ENCODE measurements at regions of chr11 and their contacts with region 1.

Region 1: DNA sequence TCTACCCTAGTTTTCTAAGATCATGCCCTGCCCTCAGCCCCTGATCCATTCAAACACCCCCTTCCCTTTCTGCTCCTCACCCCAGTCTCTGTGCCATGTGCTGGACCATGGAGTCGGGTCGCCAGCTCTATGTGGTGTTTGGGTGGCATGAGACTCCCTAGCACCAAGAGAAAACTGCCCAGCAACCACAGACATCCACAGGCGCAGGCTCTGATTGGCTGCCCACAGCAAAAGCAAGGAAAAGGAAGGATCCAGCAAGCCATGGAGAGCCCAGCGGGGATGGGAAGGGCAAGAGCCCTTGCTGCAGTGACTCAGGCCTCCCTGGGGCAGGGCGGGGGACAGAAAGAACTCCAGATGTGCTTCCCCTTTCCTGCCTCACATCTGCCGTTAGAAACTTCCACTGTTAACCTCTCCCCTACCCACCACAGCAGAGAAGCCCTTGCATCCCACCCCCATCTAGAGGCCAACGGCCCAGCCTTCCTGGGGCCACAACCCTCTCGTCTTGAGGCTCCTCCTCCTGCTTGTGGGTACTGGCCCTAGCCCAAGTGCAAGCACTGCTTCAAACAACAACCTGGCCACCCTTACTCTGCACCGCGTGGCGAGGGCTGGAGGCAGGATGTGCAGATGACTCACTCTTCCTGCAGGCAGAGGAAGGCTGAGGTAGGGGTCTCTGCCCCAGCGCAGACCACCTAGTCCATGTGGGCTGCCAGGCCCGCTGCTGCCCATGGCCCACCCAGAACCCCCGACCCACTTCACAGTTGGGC is 9.7 kb upstream of the AHNAK start:
- DNase-seq: peak; percentile 90 to 94
- H3K4me3 ChIP-seq: peak overlapping the region; percentile 38; the same call in 1 of the 2 replicates
- H3K27ac ChIP-seq: peak overlapping the region; percentile 92
- H3K4me1 ChIP-seq: peaks cover 96% of the 10 kb centered on the region
- H3K27me3 ChIP-seq: no peaks in the 10 kb centered on the region
- CTCF ChIP-seq: no peak

Region 2: GRCh38 chr11:62394825-62395538 is 161.3 kb before region 1 on chr11:
- CTCF ChIA-PET with region 1: interaction called, 19 read pairs
- POLR2A ChIA-PET with region 1: interaction called, 10 read pairs
- intact Hi-C with region 1: loop called (anchors 1 kb)
- DNase-seq: peak; percentile 71 to 75
- H3K4me3 ChIP-seq: no peak overlapping the region
- H3K27ac ChIP-seq: no peak overlapping the region
- H3K4me1 ChIP-seq: peaks cover 27% of the 10 kb centered on the region
- H3K27me3 ChIP-seq: no peaks in the 10 kb centered on the region
- CTCF ChIP-seq: peak; percentile 91

Region 3: GRCh38 chr11:62497132-62497915 is 59.0 kb before region 1 on chr11:
- CTCF ChIA-PET with region 1: interaction called, 14 read pairs
- POLR2A ChIA-PET with region 1: interaction called, 3 read pairs
- intact Hi-C with region 1: loop called (anchors 1 kb)
- DNase-seq: peak; percentile 76 to 98
- H3K4me3 ChIP-seq: no peak overlapping the region
- H3K27ac ChIP-seq: peak overlapping the region; percentile 73
- H3K4me1 ChIP-seq: peaks cover 28% of the 10 kb centered on the region
- H3K27me3 ChIP-seq: no peaks in the 10 kb centered on the region
- CTCF ChIP-seq: peak; percentile 74

Region 4: DNA sequence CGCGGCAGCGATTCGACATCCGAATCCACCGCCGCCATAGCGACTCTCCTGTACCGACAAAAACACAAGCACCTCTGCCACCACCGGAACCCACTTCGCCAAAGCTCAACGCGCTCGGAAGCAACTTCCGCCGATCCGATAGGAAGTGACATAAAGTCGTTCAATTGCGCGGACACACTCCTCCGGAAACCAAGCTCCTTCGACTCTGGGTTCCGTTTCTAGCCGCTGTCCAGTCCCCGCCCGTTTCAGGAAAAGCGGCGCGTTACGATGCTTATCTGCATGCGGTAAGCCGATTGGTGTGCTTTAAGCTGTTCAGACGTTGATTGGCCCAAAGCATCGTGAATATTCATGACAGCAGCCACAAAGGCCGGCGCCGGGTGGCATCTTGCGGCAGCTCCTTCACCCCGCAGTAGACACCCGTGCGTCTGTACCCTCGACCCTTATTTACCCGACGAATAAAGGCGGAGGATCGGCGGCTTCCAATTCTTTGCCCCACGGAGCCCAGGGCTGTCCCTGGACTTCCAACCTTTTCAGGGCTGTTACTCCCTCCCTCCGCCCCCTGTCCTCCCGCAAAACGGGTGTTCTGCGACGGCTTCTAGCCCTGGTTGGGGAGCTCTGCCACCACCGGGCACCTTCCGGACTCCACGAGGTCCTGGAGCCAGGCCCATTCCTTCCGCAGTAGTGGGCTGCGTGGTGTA is 35.3 kb after region 1 on chr11 and contains the start of gene TUT1:
- CTCF ChIA-PET with region 1: interaction called, 6 read pairs
- POLR2A ChIA-PET with region 1: interaction called, 5 read pairs
- intact Hi-C with region 1: loop called (anchors 5 kb)
- DNase-seq: peak; percentile 98 to 100
- H3K4me3 ChIP-seq: peak within 1 kb of the TSS; percentile 84
- H3K27ac ChIP-seq: peak within 1 kb of the TSS; percentile 61
- H3K4me1 ChIP-seq: peaks cover 29% of the 10 kb centered on the region
- H3K27me3 ChIP-seq: no peaks in the 10 kb centered on the region
- CTCF ChIP-seq: no peak
- total RNA-seq, gene TUT1: 39.3 and 40.5 TPM in 2 replicates

Region 5: DNA sequence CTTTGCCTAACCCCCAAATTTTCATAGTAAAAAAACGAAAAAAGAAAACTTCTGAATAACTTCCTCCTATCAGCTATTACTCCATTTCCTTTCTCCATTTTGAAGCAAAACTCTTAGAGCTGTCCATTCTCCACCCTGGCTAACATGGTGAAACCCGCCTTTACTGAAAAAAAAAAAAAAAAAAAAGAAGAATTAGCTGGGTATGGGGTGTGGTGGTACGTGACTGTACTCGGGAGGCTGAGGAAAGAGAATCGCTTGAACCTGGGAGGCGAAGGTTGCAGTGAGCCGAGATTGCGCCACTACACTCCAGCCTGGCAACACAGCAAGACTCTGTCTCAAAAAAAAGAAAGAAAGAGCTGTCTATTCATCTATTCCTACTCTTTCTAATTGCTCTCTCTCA is 260.3 kb after region 1 on chr11:
- CTCF ChIA-PET with region 1: no interaction called
- POLR2A ChIA-PET with region 1: interaction called, 17 read pairs
- intact Hi-C with region 1: no loop called
- DNase-seq: no peak
- H3K4me3 ChIP-seq: no peak overlapping the region
- H3K27ac ChIP-seq: no peak overlapping the region
- H3K4me1 ChIP-seq: no peaks in the 10 kb centered on the region
- H3K27me3 ChIP-seq: no peaks in the 10 kb centered on the region
- CTCF ChIP-seq: no peak

Measured in PC-9 (cell line).